Naive thymus-derived CD4-positive, alpha-beta T cell (primary cell): ENCODE measurements at regions of chr7 and their contacts with region 1.

Region 1: GRCh38 chr7:90155206-90155605 is 937 bp downstream of the STEAP1 start:
- DNase-seq: no peak
- ATAC-seq: no peak
- H3K4me3 ChIP-seq: no peak overlapping the region
- H3K4me3 Mint-ChIP-seq: peak overlapping the region in 3 of 10 donors; percentile 55 to 64 (median 59)
- H3K27ac ChIP-seq: no peak overlapping the region
- H3K27ac Mint-ChIP-seq: no peak overlapping the region
- H3K4me1 ChIP-seq: no peaks in the 10 kb centered on the region
- H3K4me1 Mint-ChIP-seq: peaks cover 0 to 7% (median 2%) of the 10 kb centered on the region in 7 donors
- H3K27me3 ChIP-seq: no peaks in the 10 kb centered on the region
- H3K27me3 Mint-ChIP-seq: peaks cover 11 to 39% (median 30%) of the 10 kb centered on the region in 5 donors

Region 2: GRCh38 chr7:90262438-90262837 is 107.2 kb after region 1 on chr7:
- CTCF ChIA-PET with region 1: no interaction called
- POLR2A ChIA-PET with region 1: no interaction called
- intact Hi-C with region 1: loop called (anchors 1 kb)
- DNase-seq: peak in 1 of 9 donors; percentile 4
- ATAC-seq: no peak
- H3K4me3 ChIP-seq: no peak overlapping the region
- H3K4me3 Mint-ChIP-seq: no peak overlapping the region
- H3K27ac ChIP-seq: no peak overlapping the region
- H3K27ac Mint-ChIP-seq: no peak overlapping the region
- H3K4me1 ChIP-seq: no peaks in the 10 kb centered on the region
- H3K4me1 Mint-ChIP-seq: no peaks in the 10 kb centered on the region
- H3K27me3 ChIP-seq: no peaks in the 10 kb centered on the region
- H3K27me3 Mint-ChIP-seq: peaks cover 6 to 27% (median 13%) of the 10 kb centered on the region in 5 donors

Region 3: GRCh38 chr7:90346336-90347125 is 191.3 kb after region 1 on chr7 and contains the start of gene GTPBP10:
- CTCF ChIA-PET with region 1: no interaction called
- POLR2A ChIA-PET with region 1: no interaction called
- intact Hi-C with region 1: loop called in 1 of 2 experiments (anchors 2 kb)
- DNase-seq: peak; percentile 88 to 96 (median 94)
- ATAC-seq: peak; percentile 99
- H3K4me3 ChIP-seq: peak within 1 kb of the TSS; percentile 83
- H3K4me3 Mint-ChIP-seq: peak within 1 kb of the TSS; percentile 93 to 99 (median 98)
- H3K27ac ChIP-seq: peak within 1 kb of the TSS; percentile 95
- H3K27ac Mint-ChIP-seq: peak within 1 kb of the TSS; percentile 96 to 100 (median 99)
- H3K4me1 ChIP-seq: peaks cover 13 to 26% of the 10 kb centered on the region in 2 donors
- H3K4me1 Mint-ChIP-seq: peaks cover 23 to 65% (median 53%) of the 10 kb centered on the region in 7 donors
- H3K27me3 ChIP-seq: no peaks in the 10 kb centered on the region
- H3K27me3 Mint-ChIP-seq: peaks cover 0 to 2% (median 0%) of the 10 kb centered on the region in 5 donors
- total RNA-seq, gene GTPBP10: 21.5 to 51.4 (median 29.8) TPM

Region 4: GRCh38 chr7:90412458-90413184 is 257.4 kb after region 1 on chr7:
- CTCF ChIA-PET with region 1: no interaction called
- POLR2A ChIA-PET with region 1: no interaction called
- intact Hi-C with region 1: loop called in 1 of 2 experiments (anchors 5 kb)
- DNase-seq: no peak
- ATAC-seq: no peak
- H3K4me3 ChIP-seq: no peak overlapping the region
- H3K4me3 Mint-ChIP-seq: no peak overlapping the region
- H3K27ac ChIP-seq: no peak overlapping the region
- H3K27ac Mint-ChIP-seq: peak overlapping the region in 1 of 9 donors; percentile 24
- H3K4me1 ChIP-seq: no peaks in the 10 kb centered on the region
- H3K4me1 Mint-ChIP-seq: peaks cover 0 to 1% (median 0%) of the 10 kb centered on the region in 7 donors
- H3K27me3 ChIP-seq: no peaks in the 10 kb centered on the region
- H3K27me3 Mint-ChIP-seq: no peaks in the 10 kb centered on the region